CD4-positive, alpha-beta T cell (primary cell): ENCODE measurements at regions of chr3 and their contacts with region 1.

Region 1: DNA sequence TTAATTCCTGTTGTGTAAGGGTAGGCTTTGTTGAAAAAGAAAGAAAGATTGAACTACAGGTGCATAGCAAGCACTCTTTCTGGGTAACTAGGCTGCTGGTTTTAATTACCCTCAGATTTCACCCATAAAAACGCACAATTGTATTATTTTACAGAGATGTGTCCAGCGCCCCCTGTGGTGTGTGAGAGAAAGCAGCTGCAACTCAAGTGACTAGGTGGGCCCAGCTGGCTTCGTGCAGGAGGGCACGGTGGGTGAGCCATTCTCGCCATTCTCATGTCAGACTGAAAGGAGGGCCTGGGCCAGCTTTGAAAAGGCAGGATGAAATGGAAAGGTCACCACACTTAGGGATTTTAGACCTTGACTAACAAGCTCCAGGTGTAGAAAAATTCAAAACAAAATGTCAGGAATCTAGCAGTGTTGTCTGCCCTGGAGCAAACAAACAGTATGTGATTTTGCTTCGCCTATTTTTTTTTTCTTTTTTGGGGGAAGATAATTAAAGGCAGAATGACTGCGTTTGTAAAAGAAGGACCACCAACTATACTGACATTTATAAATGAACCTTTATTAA is 122.5 kb downstream of the LRIG1 start:
- DNase-seq: peak in 13 of 14 experiments; percentile 19 to 75 (median 39)
- ATAC-seq: peak; percentile 72
- H3K4me3 ChIP-seq: no peak overlapping the region
- H3K4me3 Mint-ChIP-seq: no peak overlapping the region
- H3K27ac ChIP-seq: peak overlapping the region in 1 of 2 donors; percentile 70
- H3K27ac Mint-ChIP-seq: peak overlapping the region; percentile 85
- H3K4me1 ChIP-seq: peaks cover 14% of the 10 kb centered on the region
- H3K4me1 Mint-ChIP-seq: peaks cover 18% of the 10 kb centered on the region
- H3K27me3 ChIP-seq: no peaks in the 10 kb centered on the region
- H3K27me3 Mint-ChIP-seq: no peaks in the 10 kb centered on the region
- CTCF ChIP-seq: peak; percentile 55

Region 2: GRCh38 chr3:66302288-66302687 is 76.1 kb before region 1 on chr3:
- CTCF ChIA-PET with region 1: interaction called, 12 read pairs
- POLR2A ChIA-PET with region 1: interaction called, 6 read pairs
- intact Hi-C with region 1: loop called in 1 of 2 experiments (anchors 2 kb)
- DNase-seq: peak in 12 of 14 experiments; percentile 9 to 92 (median 40)
- ATAC-seq: peak; percentile 80
- H3K4me3 ChIP-seq: no peak overlapping the region
- H3K4me3 Mint-ChIP-seq: peak overlapping the region; percentile 47
- H3K27ac ChIP-seq: peak overlapping the region; percentile 71 to 85
- H3K27ac Mint-ChIP-seq: peak overlapping the region; percentile 98
- H3K4me1 ChIP-seq: peaks cover 40% of the 10 kb centered on the region
- H3K4me1 Mint-ChIP-seq: peaks cover 81% of the 10 kb centered on the region
- H3K27me3 ChIP-seq: no peaks in the 10 kb centered on the region
- H3K27me3 Mint-ChIP-seq: no peaks in the 10 kb centered on the region
- CTCF ChIP-seq: no peak

Region 3: DNA sequence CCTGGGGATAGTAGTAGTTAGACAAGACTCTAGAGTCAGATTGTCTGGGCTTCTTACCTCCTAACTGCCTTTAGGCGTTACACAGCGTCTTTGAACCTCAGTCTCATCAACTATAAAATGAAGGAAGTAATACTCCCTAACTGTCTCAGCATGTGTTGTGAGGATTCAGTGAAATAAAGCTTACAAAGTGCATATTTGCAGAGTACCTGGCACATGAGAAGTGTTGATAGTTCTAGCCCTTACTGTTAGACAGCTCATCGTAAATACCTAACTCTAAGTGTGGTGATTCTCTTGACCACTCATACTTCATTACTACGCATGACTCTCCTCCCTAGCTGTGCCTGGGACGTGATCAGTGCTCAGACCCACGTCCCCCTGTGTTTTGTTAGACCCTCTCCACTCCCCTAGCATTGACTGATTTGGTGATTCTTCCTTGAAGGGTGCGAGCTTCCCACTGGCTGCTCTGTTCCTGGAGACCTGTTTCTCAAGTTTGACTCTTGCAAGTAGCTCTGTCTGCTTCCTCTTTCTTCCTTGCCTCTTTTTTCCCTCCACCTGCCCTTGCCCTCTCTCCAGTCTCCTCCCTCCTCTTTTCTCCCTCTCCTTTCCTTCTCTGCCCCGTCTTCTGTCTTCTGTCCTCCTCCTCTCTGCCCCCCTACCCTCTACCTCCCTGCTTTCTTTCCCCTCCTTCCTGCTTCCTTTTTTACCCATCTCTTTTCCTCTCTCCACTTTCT is 33.3 kb before region 1 on chr3:
- CTCF ChIA-PET with region 1: no interaction called
- POLR2A ChIA-PET with region 1: no interaction called
- intact Hi-C with region 1: no loop called
- DNase-seq: no peak
- ATAC-seq: no peak
- H3K4me3 ChIP-seq: no peak overlapping the region
- H3K4me3 Mint-ChIP-seq: no peak overlapping the region
- H3K27ac ChIP-seq: no peak overlapping the region
- H3K27ac Mint-ChIP-seq: no peak overlapping the region
- H3K4me1 ChIP-seq: no peaks in the 10 kb centered on the region
- H3K4me1 Mint-ChIP-seq: no peaks in the 10 kb centered on the region
- H3K27me3 ChIP-seq: no peaks in the 10 kb centered on the region
- H3K27me3 Mint-ChIP-seq: no peaks in the 10 kb centered on the region
- CTCF ChIP-seq: no peak

Region 4: DNA sequence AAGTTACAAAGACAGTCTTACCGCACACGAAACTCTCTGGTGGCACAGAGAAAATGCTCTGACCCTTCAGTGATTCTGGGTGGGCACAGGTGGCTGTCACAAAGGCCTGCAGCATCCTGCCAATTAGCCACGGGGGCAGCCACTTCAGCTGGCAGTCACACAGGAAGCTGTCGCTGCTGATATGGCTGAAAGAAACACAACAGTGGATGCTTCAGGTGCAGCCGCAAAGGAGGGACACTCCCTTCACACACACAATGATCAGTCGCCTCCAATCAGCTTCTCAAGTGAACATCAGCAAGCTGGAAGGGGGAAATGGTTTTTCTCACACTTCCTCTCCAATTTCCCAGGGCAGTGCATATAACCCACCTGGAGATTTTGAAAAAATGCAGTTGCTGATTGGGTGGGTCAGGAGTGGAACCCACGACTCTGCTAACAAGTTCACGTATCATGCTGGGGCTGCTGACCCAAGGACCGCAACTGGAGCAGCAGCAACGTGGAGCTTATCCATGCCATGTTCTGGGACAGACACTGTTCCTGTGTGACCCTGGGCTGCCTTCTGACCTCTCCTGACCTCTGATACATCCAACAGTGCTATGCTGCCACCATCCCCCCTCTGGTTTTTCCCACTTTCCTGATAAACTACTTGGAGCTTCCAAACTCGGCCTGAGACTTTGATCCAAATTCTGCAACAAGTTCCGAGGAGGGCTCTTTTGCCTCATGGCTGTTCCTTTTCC is 15.8 kb after region 1 on chr3:
- CTCF ChIA-PET with region 1: interaction called, 11 read pairs
- POLR2A ChIA-PET with region 1: interaction called, 5 read pairs
- intact Hi-C with region 1: no loop called
- DNase-seq: peak; percentile 43 to 89 (median 54)
- ATAC-seq: peak; percentile 95
- H3K4me3 ChIP-seq: peak overlapping the region; percentile 58
- H3K4me3 Mint-ChIP-seq: peak overlapping the region; percentile 82
- H3K27ac ChIP-seq: peak overlapping the region in 1 of 2 donors; percentile 74
- H3K27ac Mint-ChIP-seq: peak overlapping the region; percentile 95
- H3K4me1 ChIP-seq: peaks cover 31% of the 10 kb centered on the region
- H3K4me1 Mint-ChIP-seq: peaks cover 60% of the 10 kb centered on the region
- H3K27me3 ChIP-seq: no peaks in the 10 kb centered on the region
- H3K27me3 Mint-ChIP-seq: no peaks in the 10 kb centered on the region
- CTCF ChIP-seq: no peak